ENCODE measurements at regions of chr11 and their contacts with region 1.

Region 1: DNA sequence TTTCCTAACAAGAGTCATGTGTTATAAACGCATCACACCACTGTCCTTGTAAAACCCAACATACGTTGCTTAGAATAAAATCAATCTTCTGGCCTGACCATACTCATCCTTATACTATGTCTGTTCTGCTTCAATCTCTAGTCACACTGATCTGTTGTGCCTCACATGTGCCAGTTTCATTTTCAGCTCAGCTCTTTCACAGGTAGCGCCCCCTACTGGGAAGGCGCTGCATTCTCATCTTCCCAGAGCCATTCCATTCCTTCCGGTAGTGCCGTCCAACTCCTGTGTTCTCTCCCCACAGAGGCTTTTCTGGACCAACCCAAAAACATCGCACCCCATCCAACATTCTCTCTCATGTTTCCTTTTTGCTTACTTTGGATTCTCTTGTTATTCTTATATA is 22.2 kb downstream of the CASP5 start:
- DNase-seq: peak; percentile 72
- H3K4me3 Mint-ChIP-seq: no peak overlapping the region
- H3K27ac Mint-ChIP-seq: no peak overlapping the region
- H3K4me1 Mint-ChIP-seq: peaks cover 4% of the 10 kb centered on the region
- H3K27me3 Mint-ChIP-seq: no peaks in the 10 kb centered on the region

Region 2: GRCh38 chr11:104254347-104254746 is 746.5 kb before region 1 on chr11:
- CTCF ChIA-PET with region 1: no interaction called
- intact Hi-C with region 1: loop called (anchors 10 kb)
- DNase-seq: peak; percentile 27
- H3K4me3 Mint-ChIP-seq: no peak overlapping the region
- H3K27ac Mint-ChIP-seq: no peak overlapping the region
- H3K4me1 Mint-ChIP-seq: no peaks in the 10 kb centered on the region
- H3K27me3 Mint-ChIP-seq: no peaks in the 10 kb centered on the region

Region 3: DNA sequence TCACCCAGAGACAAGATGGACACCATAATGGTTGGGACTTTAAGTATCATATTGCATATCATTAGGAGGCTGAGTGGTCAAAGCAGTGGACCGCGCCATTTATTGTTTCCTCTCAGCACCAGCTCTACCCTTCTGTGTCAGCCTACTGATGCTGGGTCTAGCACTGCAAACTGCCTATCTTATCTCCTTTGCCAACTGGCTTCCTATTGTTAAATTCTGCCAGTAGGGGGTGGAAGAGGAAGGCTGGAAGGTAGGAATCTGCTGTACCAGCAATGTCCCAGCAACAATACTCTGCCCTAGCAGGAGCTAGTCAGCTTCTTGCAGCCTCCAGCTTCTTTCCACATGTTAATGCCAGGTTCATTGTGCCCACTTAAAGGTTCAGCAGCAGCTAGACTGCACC is 469.7 kb before region 1 on chr11:
- CTCF ChIA-PET with region 1: no interaction called
- intact Hi-C with region 1: loop called (anchors 1 kb)
- DNase-seq: peak; percentile 11
- H3K4me3 Mint-ChIP-seq: no peak overlapping the region
- H3K27ac Mint-ChIP-seq: no peak overlapping the region
- H3K4me1 Mint-ChIP-seq: peaks cover 3% of the 10 kb centered on the region
- H3K27me3 Mint-ChIP-seq: no peaks in the 10 kb centered on the region

Region 4: DNA sequence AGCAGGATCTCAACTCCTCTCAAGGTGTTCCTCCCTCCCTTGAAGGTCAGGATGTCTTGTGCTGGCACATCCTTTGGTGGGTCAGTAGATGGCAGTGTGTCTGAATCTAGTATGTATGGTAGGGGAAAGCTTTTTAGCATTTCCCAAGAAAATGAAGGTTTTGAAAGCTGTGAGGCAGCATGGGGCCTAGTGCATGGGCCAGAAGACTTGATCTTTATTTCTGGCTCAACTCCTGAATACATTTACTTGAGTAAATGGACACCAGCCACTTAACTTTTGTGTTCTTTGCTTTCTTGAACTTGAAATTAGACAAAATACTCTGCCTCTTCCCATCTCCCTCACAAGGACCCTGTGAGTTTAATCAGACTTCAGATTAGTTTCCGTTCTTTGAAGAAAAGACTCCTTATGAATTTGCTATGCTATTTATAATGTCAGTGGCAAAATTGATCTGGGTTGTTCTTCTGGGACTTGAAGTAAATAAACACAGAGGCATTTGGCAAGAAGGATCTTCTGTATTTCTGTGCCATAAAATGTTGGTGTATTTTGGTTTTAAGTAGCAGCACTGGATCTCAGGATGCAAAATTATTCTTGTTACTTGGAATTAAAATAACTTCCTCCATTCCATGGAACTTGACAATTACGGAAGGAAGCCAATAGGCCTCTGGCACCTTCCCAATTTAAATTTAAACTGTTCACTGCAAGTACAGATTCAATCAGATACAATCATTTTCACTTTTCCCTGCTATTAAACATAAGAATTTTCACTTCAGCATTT is 391.3 kb before region 1 on chr11:
- CTCF ChIA-PET with region 1: no interaction called
- intact Hi-C with region 1: loop called (anchors 1 kb)
- DNase-seq: peak; percentile 35
- H3K4me3 Mint-ChIP-seq: no peak overlapping the region
- H3K27ac Mint-ChIP-seq: no peak overlapping the region
- H3K4me1 Mint-ChIP-seq: peaks cover 13% of the 10 kb centered on the region
- H3K27me3 Mint-ChIP-seq: no peaks in the 10 kb centered on the region

Region 5: GRCh38 chr11:104823638-104824037 is 177.2 kb before region 1 on chr11:
- CTCF ChIA-PET with region 1: interaction called, 3 read pairs
- intact Hi-C with region 1: loop called (anchors 5 kb)
- DNase-seq: no peak
- H3K4me3 Mint-ChIP-seq: no peak overlapping the region
- H3K27ac Mint-ChIP-seq: no peak overlapping the region
- H3K4me1 Mint-ChIP-seq: no peaks in the 10 kb centered on the region
- H3K27me3 Mint-ChIP-seq: no peaks in the 10 kb centered on the region

Region 6: GRCh38 chr11:104946907-104947306 is 53.9 kb before region 1 on chr11:
- CTCF ChIA-PET with region 1: interaction called, 8 read pairs
- intact Hi-C with region 1: loop called (anchors 1 kb)
- DNase-seq: peak; percentile 47
- H3K4me3 Mint-ChIP-seq: no peak overlapping the region
- H3K27ac Mint-ChIP-seq: peak overlapping the region; percentile 6
- H3K4me1 Mint-ChIP-seq: peaks cover 7% of the 10 kb centered on the region
- H3K27me3 Mint-ChIP-seq: no peaks in the 10 kb centered on the region

Region 7: DNA sequence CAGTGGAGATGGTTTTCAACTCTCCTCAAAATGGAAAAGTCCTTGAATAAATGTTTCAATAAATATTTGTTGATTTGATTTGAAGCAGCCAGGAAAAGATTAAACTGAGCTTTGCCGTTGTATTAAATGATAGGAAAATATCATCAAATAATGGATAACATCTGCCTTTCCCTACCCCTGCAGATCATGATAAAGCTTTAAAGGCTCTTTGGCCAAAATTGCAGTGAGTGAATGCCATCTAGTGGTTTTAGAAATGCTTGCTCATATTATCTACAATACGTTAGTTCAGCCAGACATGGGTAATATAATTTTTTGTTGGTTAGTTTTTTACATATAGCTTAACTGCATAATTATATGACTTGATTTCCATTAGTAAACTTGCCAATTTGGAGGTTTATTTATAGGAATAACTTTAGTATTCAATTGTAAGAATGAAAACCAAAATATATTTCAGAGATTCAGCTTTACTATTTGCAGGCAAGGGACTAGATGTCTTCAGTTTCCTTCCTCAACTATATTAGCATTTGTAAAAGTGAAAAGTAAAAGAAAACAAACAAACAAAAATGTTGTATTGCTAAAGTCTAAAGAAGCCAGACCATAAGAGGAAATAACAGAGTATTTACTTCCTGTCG is 862.1 kb after region 1 on chr11:
- CTCF ChIA-PET with region 1: no interaction called
- intact Hi-C with region 1: loop called (anchors 10 kb)
- DNase-seq: no peak
- H3K4me3 Mint-ChIP-seq: no peak overlapping the region
- H3K27ac Mint-ChIP-seq: no peak overlapping the region
- H3K4me1 Mint-ChIP-seq: no peaks in the 10 kb centered on the region
- H3K27me3 Mint-ChIP-seq: peaks cover 17% of the 10 kb centered on the region